Activated B cell treated with CpG ODN at 0.5 μM for 24 hours (primary cell): ENCODE measurements at regions of chr1 and their contacts with region 1.

Region 1: DNA sequence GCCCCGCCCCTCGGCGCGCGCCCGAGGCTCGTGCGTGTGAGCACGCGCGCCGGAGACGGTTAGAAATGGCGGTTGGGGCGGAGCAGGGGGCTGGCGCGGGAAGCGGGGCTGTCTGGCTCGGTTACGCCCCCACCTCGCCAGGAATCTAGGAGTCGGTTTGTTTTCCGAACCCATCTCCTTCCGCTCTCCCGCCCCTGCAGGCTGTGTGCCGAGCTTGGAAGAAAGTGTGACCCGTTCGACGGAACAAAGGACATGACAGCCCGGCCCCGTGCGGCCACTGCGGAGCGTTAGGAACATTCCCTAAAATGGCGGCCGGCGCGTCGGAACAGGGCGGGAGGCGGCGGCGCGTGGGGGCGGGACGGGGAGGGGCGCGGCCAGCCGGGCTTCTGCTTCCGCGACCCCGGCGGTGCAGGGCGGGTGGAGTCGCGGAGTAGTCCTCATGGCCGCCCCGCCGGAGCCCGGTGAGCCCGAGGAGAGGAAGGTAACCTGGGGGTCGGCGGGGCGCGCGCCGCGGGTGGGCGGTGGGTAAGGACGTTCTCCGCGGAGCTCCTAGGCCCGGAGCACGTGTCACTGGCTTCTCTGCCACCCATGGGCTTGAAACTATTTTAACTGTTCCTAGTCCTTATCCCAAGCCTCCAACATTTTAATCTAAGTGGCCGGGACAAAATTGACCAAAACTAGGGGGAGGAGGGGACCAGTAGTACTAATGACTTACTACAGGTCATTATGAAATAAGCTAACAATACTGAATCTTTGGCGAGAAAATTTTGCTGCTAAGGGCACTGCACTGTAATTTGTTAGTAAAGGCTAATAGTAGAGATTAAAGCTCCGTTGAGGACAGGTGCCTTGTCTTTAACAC is at the start of gene COX20:
- DNase-seq: peak; percentile 95
- ATAC-seq: peak; percentile 66
- H3K4me3 Mint-ChIP-seq: peak within 1 kb of the TSS; percentile 97
- H3K27ac Mint-ChIP-seq: peak within 1 kb of the TSS; percentile 99
- H3K4me1 Mint-ChIP-seq: peaks cover 56% of the 10 kb centered on the region
- H3K27me3 Mint-ChIP-seq: no peaks in the 10 kb centered on the region
- CTCF ChIP-seq: no peak
- total RNA-seq, gene COX20: 37.1 and 37.6 TPM in 2 replicates

Region 2: DNA sequence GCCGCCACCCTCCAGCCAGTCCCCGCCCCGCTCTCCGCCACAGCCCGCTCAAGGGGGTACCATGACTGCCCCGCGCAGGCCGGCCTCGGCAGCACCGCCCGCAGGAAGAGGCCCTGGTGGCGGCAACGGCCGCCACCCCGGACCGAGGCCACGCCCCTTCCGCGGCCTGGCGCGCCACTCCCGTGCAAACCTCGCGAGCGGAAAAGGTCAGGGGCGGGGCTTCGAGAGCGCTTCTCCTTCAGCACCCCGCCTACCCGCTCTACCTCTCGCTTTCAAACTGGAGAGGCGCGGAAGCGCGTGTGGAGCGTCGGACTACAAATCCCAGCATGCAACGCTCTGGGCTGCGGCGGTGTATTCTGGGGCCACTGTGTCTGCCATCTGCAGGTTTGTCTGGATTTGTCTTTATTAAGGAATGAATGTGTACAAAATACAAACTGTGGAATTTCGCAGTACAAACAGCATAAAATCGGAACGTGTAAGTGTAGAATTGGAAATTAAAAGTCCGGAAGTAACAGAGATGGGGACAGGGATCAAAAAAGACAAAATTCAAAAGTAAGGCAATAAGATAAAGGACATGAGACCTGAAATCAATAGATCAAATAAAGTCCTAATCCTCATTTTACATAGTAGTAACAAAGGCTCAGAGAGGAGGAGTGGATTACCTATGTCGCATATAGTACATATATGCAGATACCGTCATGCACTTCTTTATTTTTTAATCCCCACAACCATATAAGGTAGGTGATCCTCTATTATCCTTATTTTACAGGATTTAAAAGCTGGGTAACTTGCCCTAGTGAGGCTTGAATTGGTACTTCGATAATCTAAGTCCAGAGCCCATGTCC is 383.3 kb before region 1 on chr1:
- CTCF ChIA-PET with region 1: no interaction called
- POLR2A ChIA-PET with region 1: no interaction called
- intact Hi-C with region 1: loop called (anchors 2 kb)
- DNase-seq: peak; percentile 97
- ATAC-seq: peak; percentile 94
- H3K4me3 Mint-ChIP-seq: peak overlapping the region; percentile 95
- H3K27ac Mint-ChIP-seq: peak overlapping the region; percentile 78
- H3K4me1 Mint-ChIP-seq: peaks cover 32% of the 10 kb centered on the region
- H3K27me3 Mint-ChIP-seq: no peaks in the 10 kb centered on the region
- CTCF ChIP-seq: no peak

Region 3: DNA sequence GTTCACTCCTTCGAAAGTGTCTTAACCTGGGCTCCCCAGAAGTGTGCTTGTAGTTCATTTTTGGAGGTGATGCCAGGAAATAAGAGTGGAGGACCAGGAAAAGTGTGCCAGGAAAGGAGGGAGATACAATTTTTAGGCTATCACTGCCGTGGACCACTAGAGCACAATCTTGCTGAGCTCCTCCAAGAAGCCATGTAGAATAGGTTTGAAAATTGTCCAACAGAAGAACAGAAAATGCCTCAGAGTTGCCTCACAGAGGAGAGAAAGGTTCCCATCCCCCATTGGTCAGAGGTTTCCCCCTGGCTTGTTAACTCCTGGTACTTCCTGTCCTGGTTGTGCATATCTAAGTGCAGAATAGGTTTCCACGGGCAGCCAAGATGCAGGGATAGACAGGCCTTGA is 332.9 kb before region 1 on chr1:
- CTCF ChIA-PET with region 1: no interaction called
- POLR2A ChIA-PET with region 1: no interaction called
- intact Hi-C with region 1: no loop called
- DNase-seq: no peak
- ATAC-seq: no peak
- H3K4me3 Mint-ChIP-seq: no peak overlapping the region
- H3K27ac Mint-ChIP-seq: no peak overlapping the region
- H3K4me1 Mint-ChIP-seq: no peaks in the 10 kb centered on the region
- H3K27me3 Mint-ChIP-seq: no peaks in the 10 kb centered on the region
- CTCF ChIP-seq: no peak

Region 4: DNA sequence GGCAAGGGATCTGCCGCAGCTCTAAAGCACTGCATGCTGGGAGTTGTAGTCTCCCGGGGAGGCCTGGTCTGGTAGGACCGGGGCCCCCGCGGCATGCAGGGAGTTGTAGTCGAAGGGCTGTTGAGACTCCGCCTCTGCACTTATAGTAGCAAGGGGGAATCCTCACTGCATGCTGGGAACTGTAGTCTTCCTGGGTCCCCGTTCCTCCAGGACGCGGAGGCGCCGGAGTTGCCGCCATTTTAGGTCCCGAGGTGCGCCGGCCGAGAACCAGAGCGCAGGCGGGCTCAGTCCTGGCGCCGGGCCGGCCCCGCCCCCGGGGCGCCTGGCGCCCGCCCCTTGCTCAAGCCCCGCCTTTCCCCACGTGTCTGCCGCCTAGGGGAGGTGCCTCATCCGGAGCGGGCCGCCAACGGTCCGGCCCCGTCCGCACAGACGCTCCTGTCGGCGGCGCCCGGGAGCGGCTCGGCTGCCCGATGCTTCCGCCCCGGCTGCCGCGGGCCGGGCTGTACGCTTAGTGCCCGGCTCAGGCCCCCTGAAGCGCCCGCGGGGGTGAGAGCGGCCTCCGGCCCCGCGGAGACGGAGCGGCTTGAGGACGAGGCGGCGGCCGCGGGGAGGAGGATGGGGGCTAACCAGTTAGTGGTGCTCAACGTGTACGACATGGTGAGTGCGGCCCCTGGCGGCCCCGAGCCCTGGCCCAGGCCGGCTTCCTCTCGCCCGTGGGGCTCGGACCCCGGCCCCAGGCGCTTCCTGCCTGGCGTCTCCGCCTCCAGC is 182.6 kb before region 1 on chr1 and contains the start of gene DESI2:
- CTCF ChIA-PET with region 1: no interaction called
- POLR2A ChIA-PET with region 1: interaction called, 12 read pairs
- intact Hi-C with region 1: loop called (anchors 1 kb)
- DNase-seq: peak; percentile 98
- ATAC-seq: peak; percentile 91
- H3K4me3 Mint-ChIP-seq: peak within 1 kb of the TSS; percentile 86
- H3K27ac Mint-ChIP-seq: peak within 1 kb of the TSS; percentile 88
- H3K4me1 Mint-ChIP-seq: peaks cover 18% of the 10 kb centered on the region
- H3K27me3 Mint-ChIP-seq: no peaks in the 10 kb centered on the region
- CTCF ChIP-seq: no peak
- total RNA-seq, gene DESI2: 24.2 and 25.8 TPM in 2 replicates

Region 5: GRCh38 chr1:244665771-244666217 is 169.7 kb before region 1 on chr1:
- CTCF ChIA-PET with region 1: no interaction called
- POLR2A ChIA-PET with region 1: no interaction called
- intact Hi-C with region 1: no loop called
- DNase-seq: no peak
- ATAC-seq: peak; percentile 87
- H3K4me3 Mint-ChIP-seq: no peak overlapping the region
- H3K27ac Mint-ChIP-seq: no peak overlapping the region
- H3K4me1 Mint-ChIP-seq: peaks cover 31% of the 10 kb centered on the region
- H3K27me3 Mint-ChIP-seq: no peaks in the 10 kb centered on the region
- CTCF ChIP-seq: no peak

Region 6: DNA sequence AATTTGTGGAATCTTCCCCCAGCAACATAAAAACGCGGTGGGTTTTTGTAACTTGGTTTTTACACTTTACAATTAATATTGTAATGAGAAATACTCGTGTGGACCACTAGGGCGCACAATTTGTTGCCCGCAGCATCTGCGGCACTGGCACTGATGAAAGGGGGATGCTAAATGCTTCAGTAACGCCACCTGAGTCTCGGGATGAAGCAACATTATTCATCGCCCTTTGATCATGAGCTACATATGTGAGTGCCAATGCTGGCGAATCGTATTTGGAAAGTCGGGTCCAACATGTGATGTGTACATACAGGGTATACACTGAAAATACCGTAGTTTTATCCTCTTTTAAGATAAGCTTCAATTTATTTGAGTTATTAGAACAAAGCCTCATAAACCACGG is 34.3 kb before region 1 on chr1:
- CTCF ChIA-PET with region 1: interaction called, 26 read pairs
- POLR2A ChIA-PET with region 1: interaction called, 21 read pairs
- intact Hi-C with region 1: loop called (anchors 1 kb)
- DNase-seq: peak; percentile 36
- ATAC-seq: peak; percentile 96
- H3K4me3 Mint-ChIP-seq: peak overlapping the region; percentile 55
- H3K27ac Mint-ChIP-seq: peak overlapping the region; percentile 59
- H3K4me1 Mint-ChIP-seq: peaks cover 5% of the 10 kb centered on the region
- H3K27me3 Mint-ChIP-seq: peaks cover 8% of the 10 kb centered on the region
- CTCF ChIP-seq: no peak

Region 7: GRCh38 chr1:244849189-244849866 is 13.8 kb after region 1 on chr1:
- CTCF ChIA-PET with region 1: no interaction called
- POLR2A ChIA-PET with region 1: interaction called, 30 read pairs
- intact Hi-C with region 1: loop called (anchors 1 kb)
- DNase-seq: no peak
- ATAC-seq: no peak
- H3K4me3 Mint-ChIP-seq: no peak overlapping the region
- H3K27ac Mint-ChIP-seq: no peak overlapping the region
- H3K4me1 Mint-ChIP-seq: peaks cover 23% of the 10 kb centered on the region
- H3K27me3 Mint-ChIP-seq: no peaks in the 10 kb centered on the region
- CTCF ChIP-seq: no peak

Region 8: DNA sequence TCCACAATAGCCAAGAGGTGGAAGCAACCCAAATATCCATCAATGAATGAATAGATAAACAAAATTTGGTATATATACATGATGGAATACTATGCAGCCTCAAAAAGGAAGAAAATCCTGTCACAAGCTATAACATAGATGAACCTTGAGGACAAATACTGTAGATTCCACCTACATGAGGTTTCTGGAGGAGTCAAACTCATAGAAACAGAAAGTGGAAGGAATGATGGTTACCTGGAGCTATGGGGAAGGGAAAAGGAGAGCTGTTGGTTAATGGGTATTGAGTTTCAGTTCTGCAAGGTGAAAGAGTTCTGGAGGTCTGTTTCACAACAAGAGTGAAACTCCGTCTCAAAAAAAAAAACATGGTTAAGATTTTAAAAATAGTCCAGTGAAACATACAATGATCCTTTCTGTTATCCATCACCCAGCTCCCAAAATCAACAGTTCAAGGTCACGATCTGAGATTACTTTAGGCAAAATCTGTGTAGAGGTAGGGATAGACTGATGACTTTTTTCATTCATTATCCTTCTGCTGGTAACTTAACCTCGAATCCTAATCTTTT is 109.7 kb after region 1 on chr1:
- CTCF ChIA-PET with region 1: interaction called, 3 read pairs
- POLR2A ChIA-PET with region 1: interaction called, 46 read pairs
- intact Hi-C with region 1: loop called (anchors 1 kb)
- DNase-seq: no peak
- ATAC-seq: peak; percentile 29
- H3K4me3 Mint-ChIP-seq: peak overlapping the region; percentile 55
- H3K27ac Mint-ChIP-seq: peak overlapping the region; percentile 82
- H3K4me1 Mint-ChIP-seq: peaks cover 35% of the 10 kb centered on the region
- H3K27me3 Mint-ChIP-seq: no peaks in the 10 kb centered on the region
- CTCF ChIP-seq: no peak

Region 9: DNA sequence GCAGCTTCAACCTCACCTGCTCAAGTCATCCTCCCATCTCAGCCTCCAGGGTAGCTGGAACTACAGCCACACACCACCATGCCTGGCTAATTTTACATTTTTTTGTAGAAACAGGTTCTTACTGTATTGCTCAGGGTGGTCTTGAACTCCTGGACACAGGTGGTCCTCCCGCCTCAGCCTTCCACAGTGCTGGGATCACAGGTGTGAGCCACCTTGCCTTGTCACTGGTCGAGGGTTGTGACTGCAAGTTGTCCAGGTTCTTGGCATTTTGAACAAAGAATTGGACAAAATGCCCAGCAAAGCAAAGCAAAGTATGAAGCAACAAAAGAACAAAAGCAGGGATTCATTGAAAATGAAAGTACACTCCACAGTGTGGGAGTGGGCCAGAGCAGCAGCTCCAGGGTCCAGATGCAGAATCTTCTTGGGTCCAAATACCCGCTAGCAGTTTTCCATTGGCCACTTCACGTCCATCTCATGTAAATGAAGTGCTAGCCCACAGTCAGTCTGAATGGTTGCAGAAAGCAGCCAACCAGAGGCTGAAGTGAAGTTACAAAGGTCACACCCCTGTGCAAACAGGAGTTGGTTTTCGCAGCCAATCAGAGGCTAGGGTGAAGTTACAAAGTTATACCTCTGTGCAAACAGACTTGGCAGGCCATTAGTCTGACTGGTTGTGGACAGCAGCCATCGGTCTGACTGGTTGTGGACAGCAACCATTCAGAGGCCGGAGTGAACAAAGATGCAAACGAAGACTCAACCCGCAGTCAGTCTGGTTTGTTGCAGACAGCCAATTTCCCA is 209.8 kb after region 1 on chr1:
- CTCF ChIA-PET with region 1: interaction called, 14 read pairs
- POLR2A ChIA-PET with region 1: interaction called, 28 read pairs
- intact Hi-C with region 1: loop called (anchors 1 kb)
- DNase-seq: no peak
- ATAC-seq: no peak
- H3K4me3 Mint-ChIP-seq: no peak overlapping the region
- H3K27ac Mint-ChIP-seq: no peak overlapping the region
- H3K4me1 Mint-ChIP-seq: no peaks in the 10 kb centered on the region
- H3K27me3 Mint-ChIP-seq: no peaks in the 10 kb centered on the region
- CTCF ChIP-seq: no peak